ENCODE measurements at regions of chr5 and their contacts with region 1.

Region 1: DNA sequence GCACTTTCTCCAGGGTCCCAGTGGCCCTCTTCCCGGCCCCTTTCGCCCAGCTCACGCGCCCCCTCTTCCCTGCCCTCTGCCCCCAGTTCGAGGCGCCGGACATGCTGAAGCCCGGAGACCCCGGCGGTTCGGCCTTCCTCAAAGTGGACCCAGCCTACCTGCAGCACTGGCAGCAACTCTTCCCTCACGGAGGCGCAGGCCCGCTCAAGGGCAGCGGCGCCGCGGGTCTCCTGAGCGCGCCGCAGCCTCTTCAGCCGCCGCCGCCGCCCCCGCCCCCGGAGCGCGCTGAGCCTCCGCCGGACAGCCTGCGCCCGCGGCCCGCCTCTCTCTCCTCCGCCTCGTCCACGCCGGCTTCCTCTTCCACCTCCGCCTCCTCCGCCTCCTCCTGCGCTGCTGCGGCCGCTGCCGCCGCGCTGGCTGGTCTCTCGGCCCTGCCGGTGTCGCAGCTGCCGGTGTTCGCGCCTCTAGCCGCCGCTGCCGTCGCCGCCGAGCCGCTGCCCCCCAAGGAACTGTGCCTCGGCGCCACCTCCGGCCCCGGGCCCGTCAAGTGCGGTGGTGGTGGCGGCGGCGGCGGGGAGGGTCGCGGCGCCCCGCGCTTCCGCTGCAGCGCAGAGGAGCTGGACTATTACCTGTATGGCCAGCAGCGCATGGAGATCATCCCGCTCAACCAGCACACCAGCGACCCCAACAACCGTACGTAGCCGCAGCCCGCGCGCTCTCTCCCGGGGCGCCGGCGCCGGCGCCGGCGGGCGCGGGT is 1.1 kb downstream of the PRDM6 start:
- DNase-seq: peak; percentile 81

Region 2: GRCh38 chr5:121189342-121190305 is 1900.5 kb before region 1 on chr5:
- intact Hi-C with region 1: no loop called
- DNase-seq: no peak

Region 3: DNA sequence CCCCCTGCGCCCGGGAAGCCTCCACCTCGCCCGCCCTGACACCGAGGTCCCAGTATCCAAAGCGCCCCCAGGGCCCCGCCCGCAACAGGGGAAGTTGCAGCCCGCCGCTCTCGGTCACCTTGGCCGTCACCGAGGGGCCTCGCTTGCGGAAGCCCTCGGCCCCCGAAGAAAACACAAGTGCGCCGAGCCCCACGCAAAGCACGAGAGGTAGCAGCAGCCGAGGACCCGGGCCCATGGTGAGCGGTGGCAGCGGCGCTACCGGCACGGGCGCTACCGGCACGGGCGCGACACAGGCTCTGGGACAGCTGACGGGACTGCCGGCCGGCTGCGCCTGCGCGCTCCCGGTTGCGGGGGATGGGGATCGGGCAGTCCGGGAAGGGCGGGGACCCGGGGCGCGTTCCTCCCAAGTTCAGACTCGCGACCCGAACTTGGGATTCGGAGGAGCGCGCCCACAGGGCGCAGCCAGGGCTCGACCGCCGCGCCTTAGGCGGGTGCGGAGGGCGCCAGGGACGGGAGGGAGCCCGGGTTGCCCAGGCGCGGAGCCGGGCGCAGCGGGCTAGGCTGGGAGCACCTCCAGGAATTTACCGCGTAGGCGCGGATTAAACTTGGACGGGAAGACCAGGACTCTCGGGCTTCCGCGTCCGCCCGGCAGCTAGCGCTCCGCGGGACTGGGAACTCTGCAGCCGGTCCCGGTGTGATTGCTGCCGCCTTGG is 53.5 kb before region 1 on chr5 and contains the start of gene PPIC:
- intact Hi-C with region 1: loop called in 1 of 2 experiments (anchors 2 kb)
- DNase-seq: peak; percentile 95
- total RNA-seq, gene PPIC: 46.2 to 76.8 TPM

Region 4: GRCh38 chr5:123150089-123150488 is 60.0 kb after region 1 on chr5:
- intact Hi-C with region 1: no loop called
- DNase-seq: no peak